Right ventricle myocardium inferior (tissue), 1 donor: ENCODE measurements at regions of chr11 and their contacts with region 1.

Region 1: DNA sequence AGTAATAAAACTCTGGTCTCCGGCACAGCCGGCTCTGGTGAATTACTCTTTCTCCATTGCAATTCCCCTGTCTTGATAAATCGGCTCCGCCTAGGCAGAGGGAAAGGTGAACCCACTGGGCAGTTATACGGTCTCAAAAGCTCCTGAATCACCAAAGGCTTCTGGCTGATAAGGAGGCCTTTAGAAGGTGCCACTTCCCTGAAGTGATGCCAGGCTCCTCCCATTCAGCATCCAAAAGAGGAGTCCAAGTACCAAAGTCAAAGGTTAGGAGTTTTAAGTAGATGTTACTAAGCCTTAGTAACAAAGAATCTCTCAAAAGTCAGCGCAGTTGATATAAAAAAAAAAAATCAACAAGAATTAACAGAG is 11.8 kb upstream of the ALKBH8 start:
- DNase-seq: no peak
- ATAC-seq: no peak

Region 2: GRCh38 chr11:107316426-107316825 is 260.9 kb before region 1 on chr11:
- intact Hi-C with region 1: no loop called
- DNase-seq: no peak
- ATAC-seq: no peak

Region 3: GRCh38 chr11:107385361-107385982 is 191.9 kb before region 1 on chr11:
- intact Hi-C with region 1: no loop called
- DNase-seq: no peak
- ATAC-seq: no peak

Region 4: GRCh38 chr11:107665018-107665417 is 87.7 kb after region 1 on chr11:
- intact Hi-C with region 1: no loop called
- DNase-seq: no peak
- ATAC-seq: no peak

Region 5: GRCh38 chr11:107770551-107770951 is 193.2 kb after region 1 on chr11:
- intact Hi-C with region 1: loop called (anchors 5 kb)
- DNase-seq: no peak
- ATAC-seq: no peak